ENCODE measurements at regions of chr1 and their contacts with region 1.

Region 1: DNA sequence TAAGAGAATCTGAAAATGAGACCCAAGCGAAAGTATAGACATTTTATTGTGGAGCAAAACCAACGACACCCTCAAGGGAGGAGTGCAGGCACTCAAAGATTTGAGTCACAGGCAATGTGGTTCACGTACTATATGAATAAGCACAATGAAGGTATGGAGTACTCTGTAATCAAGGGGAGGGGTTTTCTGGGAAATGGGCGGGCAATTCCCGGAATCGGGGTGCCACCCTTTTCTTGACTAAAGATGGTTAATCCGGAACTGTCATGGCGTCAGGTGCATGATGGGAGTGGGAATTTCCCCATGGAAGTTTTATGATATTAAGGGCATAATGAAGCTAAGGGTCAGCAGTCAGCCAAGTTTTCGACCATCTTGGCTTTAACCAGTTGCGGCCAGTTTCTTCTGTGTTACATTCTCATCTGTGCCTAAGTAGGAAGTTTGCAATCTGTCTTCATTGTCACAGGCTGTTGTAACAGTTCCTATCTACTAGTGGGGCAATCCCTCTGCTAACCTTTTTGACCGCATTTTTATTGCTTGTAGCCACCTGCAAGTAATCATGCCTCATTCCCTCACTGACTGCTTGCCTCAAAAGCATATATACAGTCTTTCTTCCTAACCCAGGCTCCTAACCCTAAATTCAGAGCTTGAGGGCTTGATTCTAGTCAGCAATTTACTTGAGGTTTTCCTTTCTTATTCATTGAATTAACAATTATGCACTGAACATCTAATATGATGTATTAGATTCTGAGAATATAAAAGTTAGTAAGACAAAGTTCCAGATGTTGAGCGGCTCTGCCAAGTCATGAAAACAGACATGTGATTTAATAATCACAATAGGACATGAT is 775 bp upstream of the AIM2 start:
- DNase-seq: peak; percentile 99
- H3K4me3 Mint-ChIP-seq: peak overlapping the region; percentile 87
- H3K27ac Mint-ChIP-seq: peak overlapping the region; percentile 99
- H3K4me1 Mint-ChIP-seq: peaks cover 34% of the 10 kb centered on the region
- H3K27me3 Mint-ChIP-seq: peaks cover 5% of the 10 kb centered on the region

Region 2: DNA sequence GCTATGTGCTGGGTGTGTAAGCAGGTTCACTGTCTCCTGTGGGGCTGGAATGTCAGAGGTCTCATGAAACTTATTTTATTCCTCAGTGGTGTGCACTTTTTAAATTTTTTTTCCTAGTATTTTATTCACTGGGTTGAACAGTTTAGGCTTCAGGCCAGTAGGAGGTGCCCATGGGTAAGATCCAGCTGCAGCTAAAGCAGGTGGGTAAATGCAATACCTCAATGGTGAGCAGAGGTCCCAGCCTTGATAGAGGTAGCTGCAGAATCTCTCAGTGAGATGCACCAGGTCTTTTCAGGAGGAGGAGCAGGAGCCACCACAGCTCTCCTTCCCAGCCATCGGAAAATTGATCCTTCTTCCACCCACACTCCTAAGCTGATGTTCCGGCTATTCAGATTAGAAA is 283.7 kb before region 1 on chr1:
- intact Hi-C with region 1: loop called (anchors 5 kb)
- DNase-seq: peak; percentile 79
- H3K4me3 Mint-ChIP-seq: no peak overlapping the region
- H3K27ac Mint-ChIP-seq: no peak overlapping the region
- H3K4me1 Mint-ChIP-seq: no peaks in the 10 kb centered on the region
- H3K27me3 Mint-ChIP-seq: peaks cover 21% of the 10 kb centered on the region

Region 3: DNA sequence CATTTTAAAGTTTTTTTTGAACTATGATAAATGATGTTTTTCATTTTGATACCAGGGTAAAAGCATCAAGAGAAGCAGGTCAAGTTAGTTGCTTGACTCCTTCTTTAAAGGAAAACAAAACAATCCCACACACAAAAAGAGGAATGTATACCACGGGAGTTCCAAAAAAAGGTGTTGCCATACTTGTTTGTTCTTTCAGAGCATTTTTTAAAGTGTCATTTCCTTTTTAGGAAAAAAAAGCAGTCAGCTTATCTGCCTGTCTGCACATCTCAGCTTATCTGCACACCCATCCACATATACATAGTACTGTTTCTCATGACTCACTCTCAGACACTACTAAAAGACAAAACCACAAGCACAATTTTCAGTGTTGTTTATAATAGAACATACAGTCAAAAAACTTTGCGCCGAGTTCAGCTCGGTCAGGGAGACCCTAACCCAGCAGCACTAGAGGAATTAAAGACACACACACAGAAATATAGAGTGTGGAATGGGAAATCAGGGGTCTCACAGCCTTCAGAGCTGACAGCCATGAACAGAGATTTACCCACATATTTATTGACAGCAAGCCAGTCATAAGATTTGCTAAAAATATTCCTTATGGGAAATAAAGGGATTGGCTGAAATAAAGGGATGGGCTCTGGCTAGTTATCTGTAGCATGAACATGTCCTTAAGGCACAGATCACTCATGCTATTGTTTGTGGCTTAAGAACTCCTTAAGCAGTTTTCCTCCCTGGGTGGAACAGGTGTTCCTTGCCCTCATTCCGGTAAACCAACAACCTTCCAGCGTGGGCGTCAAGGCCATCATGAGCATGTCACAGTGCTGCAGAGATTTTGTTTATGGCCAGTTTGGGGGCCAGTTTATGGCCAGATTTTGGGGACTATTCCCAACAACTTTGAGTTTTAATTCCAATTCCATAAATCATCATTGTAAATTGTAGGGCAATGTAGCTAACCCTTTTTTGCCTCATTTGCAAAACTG is 257.6 kb before region 1 on chr1:
- intact Hi-C with region 1: loop called (anchors 2 kb)
- DNase-seq: peak; percentile 74
- H3K4me3 Mint-ChIP-seq: peak overlapping the region; percentile 70
- H3K27ac Mint-ChIP-seq: peak overlapping the region; percentile 76
- H3K4me1 Mint-ChIP-seq: peaks cover 27% of the 10 kb centered on the region
- H3K27me3 Mint-ChIP-seq: peaks cover 7% of the 10 kb centered on the region

Region 4: DNA sequence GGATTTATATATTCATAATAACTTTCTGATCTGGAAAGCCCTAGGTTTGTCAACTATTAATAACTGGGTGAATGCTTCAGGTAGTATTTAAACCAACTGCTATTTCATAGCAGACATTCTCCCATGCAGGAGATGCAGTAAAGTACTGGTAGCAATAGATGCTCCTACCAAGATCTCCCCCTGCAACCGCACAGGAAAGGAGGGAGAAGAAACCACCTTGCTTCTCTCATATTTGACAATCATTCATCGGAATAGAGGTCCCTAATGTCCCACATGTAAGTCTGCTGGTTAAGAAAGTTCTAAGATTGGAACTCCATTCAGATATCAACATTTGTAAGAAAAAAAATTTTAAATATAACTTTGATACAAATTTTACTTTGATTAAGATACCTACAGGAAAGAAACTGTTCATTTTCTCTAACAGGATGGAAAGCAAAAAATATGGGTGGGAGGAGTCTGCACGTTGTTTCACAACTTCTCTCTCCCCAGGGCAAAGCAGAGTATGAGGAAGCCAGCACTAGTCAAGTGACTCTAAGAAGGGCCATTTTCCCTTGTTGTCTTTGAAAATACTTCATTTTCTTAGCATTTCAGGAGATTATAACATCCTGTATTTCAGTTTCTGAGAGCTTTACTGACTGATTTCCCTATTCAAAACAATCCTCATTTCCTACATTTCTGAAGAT is 146.1 kb before region 1 on chr1 and contains the start of gene PYHIN1:
- intact Hi-C with region 1: loop called (anchors 2 kb)
- DNase-seq: peak; percentile 80
- H3K4me3 Mint-ChIP-seq: peak within 1 kb of the TSS; percentile 82
- H3K27ac Mint-ChIP-seq: peak within 1 kb of the TSS; percentile 83
- H3K4me1 Mint-ChIP-seq: peaks cover 25% of the 10 kb centered on the region
- H3K27me3 Mint-ChIP-seq: peaks cover under 1% of the 10 kb centered on the region
- total RNA-seq, gene PYHIN1: 10.4 and 11.3 TPM in 2 replicates

Region 5: GRCh38 chr1:159015440-159015909 is 61.9 kb before region 1 on chr1:
- intact Hi-C with region 1: loop called (anchors 1 kb)
- DNase-seq: peak; percentile 91
- H3K4me3 Mint-ChIP-seq: peak overlapping the region; percentile 86
- H3K27ac Mint-ChIP-seq: peak overlapping the region; percentile 95
- H3K4me1 Mint-ChIP-seq: peaks cover 59% of the 10 kb centered on the region
- H3K27me3 Mint-ChIP-seq: no peaks in the 10 kb centered on the region

Region 6: DNA sequence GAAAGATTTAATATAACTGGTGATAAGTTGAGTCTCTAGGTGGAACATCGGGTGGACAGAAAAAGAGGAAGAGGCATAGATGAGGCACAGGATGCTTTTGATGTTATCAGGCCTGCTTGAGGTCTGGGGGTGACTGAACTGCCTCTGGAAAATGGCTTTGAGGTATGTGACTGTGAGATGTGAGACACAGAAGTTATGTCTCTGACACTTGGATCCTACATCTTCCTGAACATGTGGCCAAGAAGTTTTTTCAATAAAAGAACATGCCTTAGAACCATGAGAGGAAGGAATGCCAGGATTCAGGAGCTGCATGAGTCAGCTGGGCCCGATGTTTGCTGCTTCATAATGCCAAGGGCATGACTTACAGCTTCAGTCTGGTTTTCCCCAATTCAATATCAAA is 10.7 kb after region 1 on chr1:
- intact Hi-C with region 1: loop called (anchors 1 kb)
- DNase-seq: no peak
- H3K4me3 Mint-ChIP-seq: peak overlapping the region; percentile 44
- H3K27ac Mint-ChIP-seq: peak overlapping the region; percentile 86
- H3K4me1 Mint-ChIP-seq: peaks cover 45% of the 10 kb centered on the region
- H3K27me3 Mint-ChIP-seq: no peaks in the 10 kb centered on the region

Measured in activated CD4-positive, alpha-beta T cell treated with anti-CD3 and anti-CD28 coated beads, Interleukin-2, amount 10 ng/mL, durations not matched to agents 24 days and 14 days (primary cell).